Activated B cell treated with CpG ODN at 0.5 μM for 24 hours (primary cell): ENCODE measurements at regions of chr6 and their contacts with region 1.

Region 1: DNA sequence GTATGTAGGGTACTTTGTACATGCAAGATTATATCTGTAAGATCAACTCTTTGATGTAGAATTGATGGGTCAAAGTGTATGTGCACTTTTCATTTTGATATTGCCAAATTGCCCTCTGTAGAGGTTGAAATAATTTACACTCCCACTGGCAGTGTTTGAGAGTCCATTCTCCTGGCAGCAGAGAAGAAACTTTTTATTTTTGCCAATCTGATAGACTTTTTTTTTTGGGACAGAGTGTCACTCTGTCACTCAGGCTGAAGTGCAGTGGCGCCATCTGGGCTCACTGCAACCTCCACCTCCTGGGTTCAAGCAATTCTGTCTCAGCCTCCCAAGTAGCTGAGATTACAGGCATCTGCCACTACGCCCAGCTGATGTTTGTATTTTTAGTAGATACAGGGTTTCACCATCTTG is 199.2 kb downstream of the ZFAND3 start:
- DNase-seq: no peak
- ATAC-seq: no peak
- H3K4me3 Mint-ChIP-seq: no peak overlapping the region
- H3K27ac Mint-ChIP-seq: no peak overlapping the region
- H3K4me1 Mint-ChIP-seq: peaks cover 44% of the 10 kb centered on the region
- H3K27me3 Mint-ChIP-seq: no peaks in the 10 kb centered on the region
- CTCF ChIP-seq: no peak

Region 2: DNA sequence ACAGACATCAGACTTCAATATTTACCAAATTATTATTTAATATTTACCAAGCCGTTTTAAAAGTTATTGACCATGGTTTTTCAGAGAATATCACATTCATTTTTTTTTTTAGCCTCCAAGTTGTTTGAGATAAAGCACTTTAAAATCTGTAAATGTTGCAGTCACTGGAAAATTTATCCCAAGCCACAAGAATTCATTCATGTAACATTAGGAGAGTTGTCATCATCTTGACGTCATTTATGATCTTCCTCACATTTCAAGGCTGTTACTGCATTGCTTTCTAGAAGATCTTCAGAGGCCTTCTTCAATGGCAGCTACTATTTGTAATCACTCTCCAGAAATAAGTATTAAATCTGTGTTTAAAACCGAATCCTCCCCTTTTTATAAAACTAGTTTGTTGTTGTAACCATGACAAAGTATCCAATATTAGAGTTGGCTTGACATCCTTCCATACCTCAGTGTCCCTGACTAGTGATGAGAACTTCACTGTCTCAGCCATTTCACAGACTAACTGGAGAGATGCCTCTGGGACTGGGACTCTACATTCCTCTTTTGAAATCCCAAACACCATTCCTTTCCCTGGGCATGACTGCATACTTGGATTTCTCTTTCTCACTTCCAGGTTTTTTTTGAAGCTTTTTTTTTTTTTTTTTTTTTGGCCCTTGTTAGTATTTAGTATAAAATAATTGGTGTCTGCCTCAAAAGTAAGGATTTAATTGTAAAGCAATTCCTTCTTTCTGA is 99.2 kb before region 1 on chr6:
- CTCF ChIA-PET with region 1: no interaction called
- POLR2A ChIA-PET with region 1: no interaction called
- intact Hi-C with region 1: no loop called
- DNase-seq: no peak
- ATAC-seq: no peak
- H3K4me3 Mint-ChIP-seq: no peak overlapping the region
- H3K27ac Mint-ChIP-seq: no peak overlapping the region
- H3K4me1 Mint-ChIP-seq: peaks cover 45% of the 10 kb centered on the region
- H3K27me3 Mint-ChIP-seq: no peaks in the 10 kb centered on the region
- CTCF ChIP-seq: no peak

Region 3: GRCh38 chr6:37994238-37994637 is 24.5 kb before region 1 on chr6:
- CTCF ChIA-PET with region 1: no interaction called
- POLR2A ChIA-PET with region 1: no interaction called
- intact Hi-C with region 1: loop called (anchors 1 kb)
- DNase-seq: no peak
- ATAC-seq: no peak
- H3K4me3 Mint-ChIP-seq: no peak overlapping the region
- H3K27ac Mint-ChIP-seq: no peak overlapping the region
- H3K4me1 Mint-ChIP-seq: peaks cover 40% of the 10 kb centered on the region
- H3K27me3 Mint-ChIP-seq: no peaks in the 10 kb centered on the region
- CTCF ChIP-seq: no peak

Region 4: GRCh38 chr6:38034274-38034914 is 15.6 kb after region 1 on chr6:
- CTCF ChIA-PET with region 1: interaction called, 4 read pairs
- POLR2A ChIA-PET with region 1: no interaction called
- intact Hi-C with region 1: loop called (anchors 2 kb)
- DNase-seq: no peak
- ATAC-seq: no peak
- H3K4me3 Mint-ChIP-seq: no peak overlapping the region
- H3K27ac Mint-ChIP-seq: no peak overlapping the region
- H3K4me1 Mint-ChIP-seq: peaks cover 38% of the 10 kb centered on the region
- H3K27me3 Mint-ChIP-seq: no peaks in the 10 kb centered on the region
- CTCF ChIP-seq: no peak